ENCODE measurements at regions of chr5 and their contacts with region 1.

Region 1: DNA sequence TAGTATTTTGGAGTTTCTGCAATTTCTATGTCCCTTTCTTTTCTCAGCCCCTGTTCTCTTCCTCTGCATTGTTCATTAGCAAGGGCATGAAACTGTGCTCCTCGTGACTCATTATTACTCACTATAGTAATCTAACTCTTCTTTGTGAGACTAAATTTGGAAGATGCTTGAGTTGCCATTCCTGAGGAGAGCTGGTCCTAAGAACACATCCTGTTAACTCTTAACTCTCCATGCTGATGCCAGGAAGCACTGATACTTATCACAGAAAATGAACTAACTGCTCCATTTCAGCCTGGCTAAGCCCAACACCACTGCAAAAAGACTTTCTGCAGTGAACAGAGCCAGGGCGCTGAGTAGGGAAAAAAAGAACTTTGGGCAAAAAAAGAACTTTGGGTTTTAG is 10.6 kb upstream of the CSNK1A1 start:
- DNase-seq: no peak
- ATAC-seq: peak; percentile 92 to 95
- H3K4me3 ChIP-seq: no peak overlapping the region
- H3K27ac ChIP-seq: peak overlapping the region; percentile 96
- H3K4me1 ChIP-seq: peaks cover 8% of the 10 kb centered on the region
- H3K27me3 ChIP-seq: no peaks in the 10 kb centered on the region

Region 2: DNA sequence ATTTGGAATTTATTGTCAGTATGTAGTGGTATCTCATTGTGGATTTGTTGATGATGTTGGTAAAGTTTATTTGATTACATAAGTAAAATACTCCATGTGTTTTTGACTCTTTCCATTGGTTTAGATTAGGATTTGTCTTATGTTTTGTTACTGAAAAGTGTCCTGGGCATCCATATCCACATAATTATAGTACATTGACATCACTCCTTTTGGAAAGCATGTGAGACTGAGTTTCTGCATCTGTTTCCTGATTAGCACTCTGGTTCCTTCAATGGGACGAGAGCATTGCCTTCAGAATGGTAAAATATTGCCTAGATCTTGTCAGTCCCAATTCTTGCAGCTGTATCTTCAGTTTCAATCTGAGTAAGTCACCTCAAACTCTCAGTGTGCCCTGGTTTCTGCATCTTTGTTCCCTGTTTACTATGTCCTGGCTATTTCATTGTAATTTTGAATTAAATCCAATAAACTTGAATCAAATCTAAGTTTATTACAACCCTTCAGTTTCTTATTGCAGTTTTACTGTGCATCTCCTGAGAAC is 1050.0 kb before region 1 on chr5:
- intact Hi-C with region 1: no loop called
- DNase-seq: no peak
- ATAC-seq: no peak
- H3K4me3 ChIP-seq: no peak overlapping the region
- H3K27ac ChIP-seq: no peak overlapping the region
- H3K4me1 ChIP-seq: no peaks in the 10 kb centered on the region
- H3K27me3 ChIP-seq: no peaks in the 10 kb centered on the region

Region 3: DNA sequence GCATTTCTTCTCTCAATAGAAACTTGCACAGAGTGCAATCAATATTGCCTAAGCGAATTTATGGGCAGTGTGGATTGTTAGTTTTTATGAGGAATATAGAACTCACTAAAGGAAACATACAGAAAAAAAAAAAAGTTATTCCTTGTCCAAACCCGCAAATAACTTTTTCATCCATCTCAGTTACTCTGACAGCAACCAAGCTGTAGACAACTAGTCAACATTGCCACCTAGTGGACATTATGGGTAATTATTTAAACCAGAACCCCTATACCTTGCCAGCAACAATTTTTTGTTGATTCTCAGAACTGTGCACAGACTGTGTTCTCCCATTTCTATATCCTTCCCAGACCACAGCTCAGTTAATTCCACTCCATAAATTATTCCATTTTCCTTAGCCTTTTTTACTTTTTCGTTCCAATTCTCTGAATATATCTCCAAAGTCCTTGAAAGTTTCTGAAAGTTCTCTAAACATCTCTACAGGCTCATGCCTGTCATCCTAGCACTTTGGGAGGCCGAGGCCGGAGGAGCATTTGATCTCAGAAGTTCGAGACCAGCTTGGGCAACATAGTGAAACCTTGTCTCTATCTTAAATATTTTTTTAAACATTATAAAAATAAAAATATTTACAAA is 292.8 kb before region 1 on chr5:
- intact Hi-C with region 1: loop called in 1 of 4 experiments (anchors 10 kb)
- DNase-seq: no peak
- ATAC-seq: no peak
- H3K4me3 ChIP-seq: no peak overlapping the region
- H3K27ac ChIP-seq: no peak overlapping the region
- H3K4me1 ChIP-seq: peaks cover 2% of the 10 kb centered on the region
- H3K27me3 ChIP-seq: no peaks in the 10 kb centered on the region

Region 4: DNA sequence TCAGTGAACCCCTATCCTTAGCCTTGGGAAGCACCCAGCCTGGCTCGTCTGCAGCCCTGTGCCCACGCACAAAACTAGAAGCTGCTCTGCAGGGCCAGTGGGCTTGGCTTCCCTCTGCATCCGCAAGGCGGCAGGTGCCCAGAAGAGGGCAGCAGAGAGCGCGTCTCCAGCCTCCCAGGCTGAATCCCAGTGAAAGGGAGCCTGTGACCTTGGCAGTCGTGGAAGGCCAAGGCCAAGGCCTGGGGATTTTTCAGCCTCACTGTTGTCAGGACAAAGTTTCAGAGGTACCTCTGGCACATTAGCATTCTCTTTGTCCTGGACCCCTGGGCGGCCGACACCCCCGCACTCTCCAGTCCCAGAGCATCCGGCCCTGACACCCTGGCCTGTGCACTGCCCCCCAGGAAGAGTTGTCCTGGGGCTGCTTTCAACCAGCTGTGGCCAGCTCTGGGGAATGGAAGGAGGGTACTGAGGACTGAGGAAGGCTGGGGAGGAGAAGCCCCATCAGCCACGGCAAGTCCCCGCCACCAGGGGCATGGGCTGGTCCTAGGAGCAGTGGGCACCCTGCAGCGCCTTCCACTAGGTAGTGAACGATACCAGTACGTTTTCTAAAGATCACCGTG is 119.2 kb before region 1 on chr5:
- intact Hi-C with region 1: loop called in 2 of 4 experiments (anchors 2 to 5 kb)
- DNase-seq: peak; percentile 81 to 95 (median 95)
- ATAC-seq: peak; percentile 77 to 84
- H3K4me3 ChIP-seq: no peak overlapping the region
- H3K27ac ChIP-seq: peak overlapping the region; percentile 96
- H3K4me1 ChIP-seq: peaks cover 12% of the 10 kb centered on the region
- H3K27me3 ChIP-seq: no peaks in the 10 kb centered on the region

Region 5: GRCh38 chr5:149719678-149720077 is 157.8 kb after region 1 on chr5:
- intact Hi-C with region 1: no loop called
- DNase-seq: no peak
- ATAC-seq: no peak
- H3K4me3 ChIP-seq: no peak overlapping the region
- H3K27ac ChIP-seq: no peak overlapping the region
- H3K4me1 ChIP-seq: no peaks in the 10 kb centered on the region
- H3K27me3 ChIP-seq: no peaks in the 10 kb centered on the region

Region 6: DNA sequence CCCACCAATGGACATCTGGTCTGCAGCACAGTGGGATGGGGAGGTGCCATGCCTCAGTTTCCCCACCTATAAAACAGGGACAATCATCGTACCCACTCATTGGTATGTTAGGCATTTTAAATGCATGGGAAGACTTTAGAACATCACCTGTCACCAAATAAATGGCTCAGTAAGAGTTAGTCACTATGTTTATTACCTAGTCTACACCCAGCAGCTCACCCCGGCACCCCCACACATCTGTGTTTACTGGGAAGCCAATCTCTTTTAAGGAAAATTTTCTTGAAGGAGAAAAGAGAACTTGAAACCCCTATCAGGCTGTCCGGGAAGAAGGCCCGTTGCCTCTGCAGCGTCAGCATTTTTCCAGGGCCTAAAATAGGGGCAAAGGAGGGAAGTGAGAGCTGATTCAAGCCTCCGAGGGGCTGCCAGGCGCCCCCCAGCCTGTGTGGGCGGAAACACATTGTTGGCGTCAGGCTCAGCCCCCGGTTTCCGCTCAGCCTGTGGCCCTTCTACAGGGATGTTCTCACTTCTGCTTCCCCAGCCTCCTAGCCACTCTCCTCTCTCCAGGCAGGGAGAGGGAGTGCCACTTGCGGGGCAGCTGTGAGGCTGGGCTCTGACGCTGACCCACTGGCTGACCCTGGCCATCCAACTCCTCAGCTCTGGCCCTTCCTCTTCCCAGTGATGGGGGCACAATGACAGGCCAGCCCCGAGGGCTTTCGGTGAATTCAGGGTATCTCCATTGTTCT is 519.9 kb after region 1 on chr5:
- intact Hi-C with region 1: no loop called
- DNase-seq: peak; percentile 71 to 89 (median 86)
- ATAC-seq: peak; percentile 82
- H3K4me3 ChIP-seq: no peak overlapping the region
- H3K27ac ChIP-seq: no peak overlapping the region
- H3K4me1 ChIP-seq: no peaks in the 10 kb centered on the region
- H3K27me3 ChIP-seq: no peaks in the 10 kb centered on the region